IMR-90 (cell line): ENCODE measurements at regions of chr19 and their contacts with region 1.

Region 1: DNA sequence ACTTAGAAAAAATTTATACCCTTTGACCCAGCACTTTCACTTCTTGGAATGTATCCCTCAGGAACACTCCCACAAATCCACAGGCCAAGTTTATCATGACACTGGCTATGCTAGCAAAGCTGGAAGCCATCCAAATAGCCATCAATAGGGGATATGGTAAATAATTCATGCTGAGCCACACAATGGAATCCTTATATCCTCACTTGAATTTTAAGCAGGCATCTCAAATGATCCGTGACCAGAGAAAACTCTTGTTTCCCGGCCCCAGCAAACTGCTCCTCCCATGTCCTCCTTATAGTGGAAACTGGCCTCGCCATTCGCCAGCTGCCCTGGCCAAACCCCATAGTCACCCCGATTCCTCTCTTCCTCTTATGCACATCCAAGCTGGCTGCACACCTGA is 37.6 kb downstream of the GRIK5 start:
- DNase-seq: no peak
- ATAC-seq: no peak
- H3K4me3 ChIP-seq: no peak overlapping the region
- H3K27ac ChIP-seq: no peak overlapping the region
- H3K4me1 ChIP-seq: no peaks in the 10 kb centered on the region
- H3K27me3 ChIP-seq: peaks cover 22% of the 10 kb centered on the region
- CTCF ChIP-seq: no peak
- POLR2A ChIP-seq: no peak
- RAD21 ChIP-seq: no peak

Region 2: DNA sequence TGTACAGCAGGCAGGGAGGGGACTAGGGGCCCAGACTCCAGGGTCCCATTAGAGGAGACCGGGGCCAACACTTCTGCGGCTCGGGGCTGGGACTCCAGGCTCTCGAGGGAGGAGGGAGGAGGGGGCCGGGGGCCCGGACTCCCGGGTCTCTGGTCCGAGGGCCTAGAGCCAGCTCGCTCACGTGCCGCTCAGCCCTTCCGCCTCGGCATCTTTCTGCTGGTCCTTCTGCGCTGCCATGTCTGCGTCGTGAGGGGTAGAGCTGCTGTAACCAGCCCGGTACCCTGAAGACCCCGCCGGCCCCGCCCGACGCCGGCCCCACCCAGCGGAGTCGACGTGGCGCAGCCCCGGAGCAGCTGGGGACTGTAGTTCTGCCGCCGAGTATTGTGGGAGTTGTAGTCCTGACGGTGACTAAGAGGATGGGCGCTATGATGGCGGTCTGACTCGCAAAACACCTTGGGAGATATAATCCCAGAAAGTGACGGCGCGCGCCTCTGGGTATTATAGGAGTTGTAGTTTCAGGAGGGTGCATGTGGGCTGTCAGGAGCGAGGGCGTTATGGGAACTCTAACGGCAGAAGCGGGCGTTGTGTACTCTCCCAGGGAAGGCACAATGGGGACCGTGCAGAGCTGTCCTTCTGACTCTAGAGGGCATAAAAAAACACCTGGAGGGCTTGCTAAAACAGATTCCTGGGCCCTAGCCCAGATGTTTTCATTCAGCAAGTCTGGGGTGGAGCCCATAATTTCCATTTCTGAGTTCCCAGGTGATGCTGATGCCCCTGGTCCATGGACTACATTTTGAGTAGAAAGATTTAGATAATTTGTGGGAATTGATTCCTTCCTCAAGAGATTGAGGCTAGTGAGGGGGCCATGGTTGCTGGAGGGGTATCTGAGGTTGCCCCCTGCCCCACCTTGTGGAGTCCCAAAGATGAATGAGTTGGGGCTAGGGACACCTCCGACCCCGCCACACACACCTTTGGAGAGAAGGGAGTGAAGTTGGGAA is 73.1 kb before region 1 on chr19 and contains the start of gene RABAC1:
- CTCF ChIA-PET with region 1: interaction called, 4 read pairs
- POLR2A ChIA-PET with region 1: no interaction called
- dilution Hi-C with region 1: no loop called
- in situ Hi-C with region 1: no loop called
- intact Hi-C with region 1: loop called (anchors 5 kb)
- DNase-seq: peak; percentile 91
- ATAC-seq: peak; percentile 87
- H3K4me3 ChIP-seq: peak within 1 kb of the TSS; percentile 88
- H3K27ac ChIP-seq: peak within 1 kb of the TSS; percentile 79
- H3K4me1 ChIP-seq: peaks cover 6% of the 10 kb centered on the region
- H3K27me3 ChIP-seq: no peaks in the 10 kb centered on the region
- CTCF ChIP-seq: no peak; the same call in 1 of the 2 replicates
- POLR2A ChIP-seq: peak; percentile 93
- RAD21 ChIP-seq: 0 out of 2 replicates have a peak, but pooled peaks have one; percentile 5
- total RNA-seq, gene RABAC1: 117 and 145 TPM in 2 replicates

Region 3: DNA sequence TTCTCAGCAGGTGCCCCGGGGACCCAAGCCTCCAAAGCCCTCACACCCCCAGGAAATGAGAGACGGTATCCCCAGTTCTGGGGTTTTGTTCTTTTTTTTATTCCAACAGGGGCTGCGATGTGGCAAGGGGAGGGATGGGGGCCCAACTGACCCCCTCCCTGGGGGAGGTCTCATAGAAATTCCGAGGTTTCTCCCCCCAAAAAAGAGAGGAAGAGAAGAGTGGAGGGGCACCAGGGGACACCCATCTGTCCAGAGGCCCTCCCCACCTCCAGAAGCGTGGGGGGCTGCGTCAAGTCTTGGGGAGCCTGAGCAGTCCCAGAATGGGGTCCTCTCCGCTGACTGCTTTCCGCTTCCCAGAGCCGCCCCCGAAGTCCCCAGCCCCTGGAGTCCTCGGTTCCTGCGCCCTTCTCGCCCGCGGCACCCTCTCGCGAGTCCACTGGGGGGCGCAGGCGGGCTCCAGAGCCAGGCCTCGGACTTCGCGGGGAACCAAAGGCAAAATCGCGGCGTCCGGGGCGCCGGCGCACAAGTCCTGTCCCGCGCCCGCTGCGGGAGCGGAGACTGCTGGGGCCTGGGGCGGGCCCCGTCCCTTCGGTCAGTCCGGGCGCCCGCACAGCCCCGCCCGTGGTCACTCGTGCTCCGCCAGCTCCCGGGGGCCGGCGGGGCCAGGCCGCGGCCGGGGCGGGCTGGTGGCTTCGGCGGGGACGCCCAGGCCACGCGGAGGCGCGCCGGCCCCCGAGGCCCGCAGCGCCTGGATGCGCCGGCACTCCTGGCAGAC is 34.0 kb before region 1 on chr19:
- CTCF ChIA-PET with region 1: interaction called, 4 read pairs
- POLR2A ChIA-PET with region 1: no interaction called
- dilution Hi-C with region 1: no loop called
- in situ Hi-C with region 1: no loop called
- intact Hi-C with region 1: loop called (anchors 1 kb)
- DNase-seq: peak; percentile 39
- ATAC-seq: peak; percentile 57
- H3K4me3 ChIP-seq: no peak overlapping the region
- H3K27ac ChIP-seq: no peak overlapping the region
- H3K4me1 ChIP-seq: no peaks in the 10 kb centered on the region
- H3K27me3 ChIP-seq: peaks cover 75% of the 10 kb centered on the region
- CTCF ChIP-seq: peak; percentile 68
- POLR2A ChIP-seq: no peak
- RAD21 ChIP-seq: peak; percentile 62